ENCODE measurements at regions of chr1 and their contacts with region 1.

Region 1: GRCh38 chr1:147627435-147628110 is 42.8 kb downstream of the ACP6 start:
- DNase-seq: peak; percentile 78

Region 2: GRCh38 chr1:147273409-147274336 is 353.9 kb before region 1 on chr1:
- intact Hi-C with region 1: loop called (anchors 10 kb)
- DNase-seq: no peak

Region 3: DNA sequence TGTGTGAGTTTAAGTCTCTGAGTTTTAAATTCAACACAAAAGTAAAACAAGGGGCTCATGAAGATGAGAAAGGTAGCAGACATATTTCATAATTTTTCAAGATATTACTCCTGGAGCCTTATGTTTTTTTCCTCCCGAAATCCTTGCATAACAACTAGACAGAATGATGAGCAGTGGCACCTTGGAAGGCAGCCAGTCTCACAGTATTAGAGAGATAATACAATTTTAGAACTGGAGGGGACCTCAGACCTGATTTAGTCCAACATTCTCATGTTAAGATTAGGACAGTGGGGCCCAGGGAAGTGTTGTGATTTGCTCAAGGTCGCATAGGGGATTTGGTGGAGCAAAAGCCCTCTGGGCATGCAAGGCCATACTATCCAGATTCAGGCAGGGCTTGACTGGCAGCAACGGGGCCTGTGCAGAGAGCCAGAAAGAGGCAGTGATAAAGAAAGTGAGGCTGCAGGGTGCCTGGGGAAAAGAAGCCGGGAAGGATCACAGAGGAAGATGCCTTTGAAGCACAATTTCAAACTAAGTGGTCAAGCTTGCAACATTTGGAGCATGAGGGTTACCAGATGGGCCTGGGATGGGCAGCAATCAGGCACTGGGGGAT is 117.7 kb before region 1 on chr1:
- intact Hi-C with region 1: loop called (anchors 5 kb)
- DNase-seq: no peak

Region 4: DNA sequence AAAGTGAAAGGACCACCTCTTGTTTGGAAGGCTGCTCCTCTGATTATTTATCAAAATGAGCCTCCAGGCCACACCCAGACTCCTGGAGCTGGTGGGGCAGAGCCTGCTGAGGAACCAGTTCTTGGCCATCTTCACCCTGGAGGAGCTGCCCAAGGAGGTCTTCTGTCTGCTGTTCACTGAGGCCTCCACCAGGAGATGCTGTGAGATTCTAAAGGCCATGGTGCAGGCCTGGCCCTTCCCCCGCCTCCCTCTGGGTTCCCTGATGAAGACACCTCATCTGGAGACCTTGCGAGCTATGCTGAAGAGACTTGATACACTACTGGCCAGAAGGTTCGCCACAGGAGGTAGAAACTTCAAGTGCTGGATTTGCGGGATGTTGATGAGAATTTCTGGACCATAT is 213.3 kb after region 1 on chr1:
- intact Hi-C with region 1: no loop called
- DNase-seq: no peak

Measured in cardiac septum (tissue), 1 donor.